AG04450 (cell line): ENCODE measurements at regions of chr2 and their contacts with region 1.

Region 1: GRCh38 chr2:194686569-194686968 is 970.5 kb upstream of the SLC39A10 start:
- DNase-seq: no peak
- H3K4me3 ChIP-seq: no peak overlapping the region
- H3K27ac ChIP-seq: no peak overlapping the region
- H3K27me3 ChIP-seq: no peaks in the 10 kb centered on the region
- CTCF ChIP-seq: no peak

Region 2: GRCh38 chr2:194602750-194603149 is 83.8 kb before region 1 on chr2:
- CTCF ChIA-PET with region 1: no interaction called
- POLR2A ChIA-PET with region 1: interaction called, 13 read pairs
- DNase-seq: no peak
- H3K4me3 ChIP-seq: no peak overlapping the region
- H3K27ac ChIP-seq: no peak overlapping the region
- H3K27me3 ChIP-seq: no peaks in the 10 kb centered on the region
- CTCF ChIP-seq: no peak